ENCODE measurements at regions of chr1 and their contacts with region 1.

Region 1: GRCh38 chr1:160098852-160099561 is 588 bp upstream of the IGSF8 start:
- DNase-seq: peak; percentile 85
- ATAC-seq: peak; percentile 79
- H3K4me3 ChIP-seq: peak overlapping the region; percentile 69 to 76 (median 70)
- H3K27ac ChIP-seq: peak overlapping the region; percentile 67
- H3K4me1 ChIP-seq: peaks cover 87% of the 10 kb centered on the region
- H3K27me3 ChIP-seq: no peaks in the 10 kb centered on the region
- CTCF ChIP-seq: peak; percentile 10; the same call in 1 of the 2 replicates
- EP300 ChIP-seq: no peak
- POLR2A ChIP-seq: peak; percentile 20 to 72; a peak in 2 of 4 replicates
- RAD21 ChIP-seq: no peak

Region 2: DNA sequence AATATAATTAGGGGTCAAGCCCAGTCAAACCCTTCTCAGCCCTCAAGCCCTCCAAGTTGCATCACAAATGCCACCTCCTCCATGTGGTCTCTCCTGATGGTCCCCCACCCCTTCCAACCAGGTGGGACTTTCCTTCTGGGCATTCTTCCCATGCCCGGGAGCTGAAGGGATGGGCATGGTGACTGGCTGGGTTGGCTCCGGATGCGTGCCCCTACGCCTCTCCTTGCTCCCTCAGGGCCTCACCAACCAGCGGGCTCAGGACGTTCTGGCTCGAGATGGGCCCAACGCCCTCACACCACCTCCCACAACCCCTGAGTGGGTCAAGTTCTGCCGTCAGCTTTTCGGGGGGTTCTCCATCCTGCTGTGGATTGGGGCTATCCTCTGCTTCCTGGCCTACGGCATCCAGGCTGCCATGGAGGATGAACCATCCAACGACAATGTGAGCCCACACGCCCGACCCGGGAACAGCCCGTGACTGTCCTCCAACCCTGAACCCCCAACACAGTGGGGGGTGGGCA is 24.0 kb after region 1 on chr1:
- CTCF ChIA-PET with region 1: no interaction called
- POLR2A ChIA-PET with region 1: no interaction called
- in situ Hi-C with region 1: no loop called
- intact Hi-C with region 1: no loop called
- DNase-seq: no peak
- ATAC-seq: no peak
- H3K4me3 ChIP-seq: no peak overlapping the region
- H3K27ac ChIP-seq: no peak overlapping the region
- H3K4me1 ChIP-seq: peaks cover 47% of the 10 kb centered on the region
- H3K27me3 ChIP-seq: no peaks in the 10 kb centered on the region; a peak in 1 of 5 replicates
- CTCF ChIP-seq: no peak
- EP300 ChIP-seq: no peak
- POLR2A ChIP-seq: no peak
- RAD21 ChIP-seq: no peak

Region 3: GRCh38 chr1:160161965-160162705 is 63.1 kb after region 1 on chr1:
- CTCF ChIA-PET with region 1: interaction called, 15 read pairs
- POLR2A ChIA-PET with region 1: no interaction called
- in situ Hi-C with region 1: no loop called
- intact Hi-C with region 1: loop called (anchors 1 kb)
- DNase-seq: peak; percentile 53
- ATAC-seq: peak; percentile 94
- H3K4me3 ChIP-seq: no peak overlapping the region
- H3K27ac ChIP-seq: no peak overlapping the region
- H3K4me1 ChIP-seq: peaks cover 39% of the 10 kb centered on the region
- H3K27me3 ChIP-seq: peaks cover 0 to 8% of the 10 kb centered on the region in 2 experiments; a peak in 4 of 5 replicates
- CTCF ChIP-seq: peak; percentile 74
- EP300 ChIP-seq: no peak
- POLR2A ChIP-seq: no peak
- RAD21 ChIP-seq: peak; percentile 58

Region 4: DNA sequence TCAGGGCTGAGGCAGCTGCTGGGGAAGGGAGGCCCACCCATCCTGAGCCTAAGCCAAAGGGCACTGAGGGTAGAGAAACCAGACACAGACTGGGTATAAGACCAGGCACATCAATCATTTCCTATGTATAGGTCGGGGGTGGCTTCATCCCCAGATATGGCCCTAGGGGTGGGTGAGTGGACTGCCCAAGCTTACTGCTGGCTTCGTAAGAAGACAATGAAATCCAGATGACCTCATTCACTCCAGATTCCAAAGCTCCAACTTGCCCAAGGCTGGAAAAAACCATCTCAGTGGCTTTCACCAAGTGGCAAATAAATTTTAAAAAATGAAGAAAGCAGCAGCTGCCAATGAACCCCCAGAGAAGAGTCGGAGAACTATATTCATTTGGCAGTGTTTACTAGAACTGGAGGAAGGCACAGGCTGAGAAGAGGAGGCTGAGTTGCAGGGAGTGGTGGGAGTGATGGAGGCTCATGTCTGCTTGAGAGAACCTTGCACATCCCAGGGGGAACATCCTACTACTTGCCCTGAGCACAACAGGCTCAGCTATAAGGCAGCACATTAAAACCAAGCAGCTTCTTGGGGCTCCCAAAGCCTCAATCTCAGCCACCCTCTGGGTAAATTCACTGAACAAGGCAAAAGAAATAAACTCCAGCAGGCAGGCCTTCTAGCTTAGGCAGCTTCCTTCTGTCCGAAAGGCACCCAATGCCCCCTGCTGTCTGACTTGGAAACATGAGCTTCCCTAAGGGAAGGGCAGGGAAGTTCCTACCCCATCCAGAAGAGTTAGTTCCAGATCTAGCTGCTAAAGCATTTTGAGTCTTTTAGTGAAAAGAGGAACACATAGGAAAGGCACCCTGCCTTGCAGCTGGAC is 120.3 kb after region 1 on chr1:
- CTCF ChIA-PET with region 1: interaction called, 12 read pairs
- POLR2A ChIA-PET with region 1: interaction called, 3 read pairs
- in situ Hi-C with region 1: loop called (anchors 10 kb)
- intact Hi-C with region 1: loop called (anchors 1 kb)
- DNase-seq: peak; percentile 45
- ATAC-seq: peak; percentile 86
- H3K4me3 ChIP-seq: no peak overlapping the region
- H3K27ac ChIP-seq: no peak overlapping the region
- H3K4me1 ChIP-seq: peaks cover 16% of the 10 kb centered on the region
- H3K27me3 ChIP-seq: no peaks in the 10 kb centered on the region
- CTCF ChIP-seq: peak; percentile 72
- EP300 ChIP-seq: no peak
- POLR2A ChIP-seq: no peak
- RAD21 ChIP-seq: 0 out of 2 replicates have a peak, but pooled peaks have one; percentile 52

Region 5: DNA sequence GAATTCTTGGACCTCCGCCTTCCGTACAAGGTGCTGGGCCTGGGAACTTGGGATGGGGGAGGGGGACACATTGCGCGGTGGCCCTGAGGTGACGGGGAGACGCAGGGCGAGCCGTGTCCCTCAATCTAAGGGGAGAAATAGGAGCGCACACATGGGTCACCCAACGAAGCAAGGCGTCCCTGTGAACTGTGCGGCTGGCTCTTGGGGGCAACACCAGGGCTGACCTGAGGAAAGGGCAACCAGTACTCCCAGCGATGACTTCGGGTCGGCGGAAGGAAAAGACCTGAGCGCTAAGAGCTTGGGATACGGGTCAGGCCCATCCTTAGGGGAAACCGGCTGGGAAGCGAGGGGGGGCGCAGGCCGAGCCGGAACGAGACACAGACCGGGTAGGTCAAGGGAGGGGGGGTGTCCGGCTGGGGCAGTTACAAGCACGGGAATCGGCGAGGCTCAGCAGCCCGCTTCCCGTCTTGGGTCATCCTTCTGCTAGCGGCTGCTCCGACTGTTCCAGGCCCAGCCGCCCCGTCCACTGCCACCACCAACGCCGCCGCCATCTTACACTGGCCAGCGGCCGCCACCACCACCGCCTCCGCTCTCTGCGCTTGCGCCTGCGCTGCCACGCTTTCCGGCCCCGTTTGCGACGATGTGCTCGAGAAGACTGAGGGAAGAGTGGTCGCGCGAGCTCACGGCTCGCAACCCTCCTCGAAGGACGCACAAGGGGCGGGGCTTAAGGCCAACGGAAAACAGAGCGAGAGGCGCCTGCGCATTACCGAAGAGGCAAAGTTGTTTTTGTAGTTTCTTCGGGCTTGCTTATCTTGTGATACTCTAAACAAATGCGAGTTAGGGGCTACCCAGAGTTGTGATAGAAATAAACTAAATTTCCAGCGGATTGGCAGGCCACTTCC is 163.1 kb after region 1 on chr1 and contains the start of gene DCAF8:
- CTCF ChIA-PET with region 1: no interaction called
- POLR2A ChIA-PET with region 1: interaction called, 14 read pairs
- in situ Hi-C with region 1: no loop called
- intact Hi-C with region 1: no loop called
- DNase-seq: peak; percentile 94
- ATAC-seq: peak; percentile 94
- H3K4me3 ChIP-seq: peak within 1 kb of the TSS; percentile 79 to 100 (median 100)
- H3K27ac ChIP-seq: peak within 1 kb of the TSS; percentile 95
- H3K4me1 ChIP-seq: peaks cover 49% of the 10 kb centered on the region
- H3K27me3 ChIP-seq: no peaks in the 10 kb centered on the region; a peak in 1 of 5 replicates
- CTCF ChIP-seq: peak; percentile 15; the same call in 1 of the 2 replicates
- EP300 ChIP-seq: 0 out of 4 replicates have a peak, but pooled peaks of 1 of the 2 experiments have one; percentile 7
- POLR2A ChIP-seq: peak; percentile 92 to 94
- RAD21 ChIP-seq: peak; percentile 33; the same call in 1 of the 2 replicates
- total RNA-seq, gene DCAF8: 52.3 and 79.8 TPM in 2 replicates

Region 6: DNA sequence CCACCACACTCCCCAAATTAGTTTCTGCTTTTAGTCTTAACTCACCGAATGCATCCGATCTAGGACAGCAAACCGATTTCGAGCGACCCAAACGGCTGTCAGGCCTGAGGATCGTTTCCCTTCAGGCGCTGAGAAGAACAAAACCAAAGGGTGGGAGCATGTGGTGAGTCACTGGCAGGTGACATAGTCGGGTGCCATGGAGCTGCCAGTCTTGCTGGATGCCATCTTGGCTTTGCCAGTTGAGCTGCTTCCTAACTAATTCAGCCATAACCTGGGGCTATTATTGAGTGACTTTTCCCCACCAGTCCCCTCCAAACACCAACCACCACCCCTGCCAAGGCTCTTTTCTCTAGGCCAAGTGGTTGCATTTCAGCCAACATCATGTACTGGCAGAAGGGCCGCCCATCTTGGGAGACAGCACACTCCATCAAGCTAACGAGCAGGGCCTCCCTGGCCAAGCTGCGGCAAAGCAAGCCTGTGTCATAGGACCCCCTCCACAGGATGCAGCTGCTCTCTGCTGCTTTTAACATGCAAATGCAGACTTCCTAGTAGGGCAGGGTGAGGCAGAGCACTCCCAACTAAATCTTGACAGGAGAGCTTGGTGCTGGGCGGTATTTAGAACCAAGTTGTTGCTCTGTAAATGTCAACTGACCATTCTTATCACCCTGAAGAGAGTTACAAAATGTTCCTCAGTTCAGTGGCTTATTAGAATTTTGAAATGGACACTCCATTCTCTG is 208.3 kb after region 1 on chr1:
- CTCF ChIA-PET with region 1: no interaction called
- POLR2A ChIA-PET with region 1: no interaction called
- in situ Hi-C with region 1: no loop called
- intact Hi-C with region 1: no loop called
- DNase-seq: no peak
- ATAC-seq: no peak
- H3K4me3 ChIP-seq: no peak overlapping the region
- H3K27ac ChIP-seq: no peak overlapping the region
- H3K4me1 ChIP-seq: no peaks in the 10 kb centered on the region
- H3K27me3 ChIP-seq: no peaks in the 10 kb centered on the region
- CTCF ChIP-seq: no peak
- EP300 ChIP-seq: no peak
- POLR2A ChIP-seq: no peak
- RAD21 ChIP-seq: no peak

Region 7: DNA sequence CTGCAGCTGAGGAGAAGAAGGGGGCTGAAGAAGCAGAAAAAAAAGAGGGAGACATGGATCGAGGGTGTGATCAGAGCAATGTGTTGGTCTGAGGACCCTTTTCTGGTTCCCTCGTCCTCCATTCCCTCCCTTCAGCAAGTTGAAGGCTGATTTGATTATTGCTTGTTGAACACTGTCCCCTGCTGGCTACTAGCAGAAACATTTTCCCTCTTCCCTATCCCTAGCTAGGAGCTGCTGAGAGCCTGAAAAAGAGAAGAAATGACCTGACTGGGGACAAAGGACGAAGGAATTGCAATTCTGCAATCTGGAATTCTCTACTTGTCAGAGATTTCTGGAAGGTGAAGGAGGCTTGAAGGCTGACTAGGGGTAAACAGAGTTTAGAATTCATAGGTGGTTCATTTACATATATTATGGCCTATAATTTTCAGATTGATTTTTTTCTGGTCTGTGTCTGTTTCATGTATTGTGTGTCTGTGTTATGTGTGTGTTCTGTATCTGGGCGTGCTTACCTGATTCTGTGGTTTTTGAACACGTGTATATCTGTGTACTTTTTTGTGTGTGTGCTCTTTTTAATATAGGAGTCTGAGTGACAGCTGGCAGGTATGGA is 277.6 kb after region 1 on chr1:
- CTCF ChIA-PET with region 1: no interaction called
- POLR2A ChIA-PET with region 1: no interaction called
- in situ Hi-C with region 1: no loop called
- intact Hi-C with region 1: loop called (anchors 5 kb)
- DNase-seq: peak; percentile 58
- ATAC-seq: peak; percentile 87
- H3K4me3 ChIP-seq: no peak overlapping the region
- H3K27ac ChIP-seq: no peak overlapping the region
- H3K4me1 ChIP-seq: peaks cover 8% of the 10 kb centered on the region
- H3K27me3 ChIP-seq: no peaks in the 10 kb centered on the region; a peak in 3 of 5 replicates
- CTCF ChIP-seq: peak; percentile 92
- EP300 ChIP-seq: no peak
- POLR2A ChIP-seq: no peak
- RAD21 ChIP-seq: peak; percentile 84

Measured in HepG2 (cell line).